Left colon (tissue), 2 donors: ENCODE measurements at regions of chr17 and their contacts with region 1.

Region 1: GRCh38 chr17:58112970-58113631 is 29.9 kb downstream of the DYNLL2 start:
- DNase-seq: peak; percentile 58 to 85
- ATAC-seq: peak; percentile 91

Region 2: DNA sequence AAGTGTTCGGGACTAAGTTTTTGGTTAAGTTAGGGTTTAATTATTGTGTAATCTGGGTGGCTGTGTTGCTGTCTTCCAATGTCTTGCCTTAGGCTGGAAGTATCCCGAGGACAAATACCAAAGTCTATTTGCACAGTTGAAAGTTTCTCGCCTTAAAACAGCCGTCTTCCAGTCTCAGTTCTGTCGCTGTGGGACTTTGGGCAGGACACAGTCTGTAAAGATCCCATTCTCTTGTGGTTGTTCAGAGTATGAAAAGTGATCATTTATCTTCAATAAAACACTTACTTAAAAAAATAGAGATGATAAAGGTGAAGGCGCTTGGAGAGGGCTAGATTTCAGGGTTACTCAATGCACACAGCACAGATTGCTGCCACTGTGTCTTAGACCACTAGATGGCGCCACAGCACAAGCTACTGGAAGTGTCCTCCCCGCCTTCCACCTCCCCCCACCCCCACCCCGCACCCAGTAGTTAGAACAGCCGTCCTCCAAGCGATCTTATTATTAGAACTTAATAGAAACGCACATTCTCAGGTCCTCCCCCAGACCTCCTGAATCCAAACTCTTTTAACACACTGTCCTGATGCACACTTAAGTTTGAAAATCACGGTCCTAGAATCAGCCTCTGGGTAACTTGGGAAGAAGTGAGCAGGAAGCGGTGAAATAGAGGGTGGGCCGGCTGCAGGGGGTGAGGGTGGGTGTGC is 982.2 kb before region 1 on chr17:
- intact Hi-C with region 1: loop called in 1 of 2 experiments (anchors 10 kb)
- DNase-seq: peak; percentile 73 to 91
- ATAC-seq: peak; percentile 86

Region 3: DNA sequence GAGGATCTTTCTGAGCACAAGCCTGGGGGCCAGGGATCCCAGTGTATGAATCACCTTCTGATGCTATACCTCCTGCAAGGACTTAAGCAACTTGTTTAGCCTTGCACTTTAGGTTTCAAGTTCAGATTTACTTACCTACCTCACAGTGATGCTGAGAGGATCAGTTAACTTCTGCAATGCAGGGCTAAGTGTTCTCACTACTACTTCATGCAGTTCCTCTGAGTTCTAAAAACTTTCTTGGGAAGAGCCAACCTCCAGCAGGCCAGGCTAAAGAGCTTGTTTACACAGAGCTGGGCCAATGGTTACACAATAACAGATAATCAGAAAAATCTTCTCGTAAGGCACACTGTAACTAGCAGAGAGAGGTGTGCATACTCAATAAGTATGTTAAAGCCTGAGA is 138.1 kb before region 1 on chr17:
- intact Hi-C with region 1: no loop called
- DNase-seq: no peak
- ATAC-seq: peak; percentile 44

Region 4: DNA sequence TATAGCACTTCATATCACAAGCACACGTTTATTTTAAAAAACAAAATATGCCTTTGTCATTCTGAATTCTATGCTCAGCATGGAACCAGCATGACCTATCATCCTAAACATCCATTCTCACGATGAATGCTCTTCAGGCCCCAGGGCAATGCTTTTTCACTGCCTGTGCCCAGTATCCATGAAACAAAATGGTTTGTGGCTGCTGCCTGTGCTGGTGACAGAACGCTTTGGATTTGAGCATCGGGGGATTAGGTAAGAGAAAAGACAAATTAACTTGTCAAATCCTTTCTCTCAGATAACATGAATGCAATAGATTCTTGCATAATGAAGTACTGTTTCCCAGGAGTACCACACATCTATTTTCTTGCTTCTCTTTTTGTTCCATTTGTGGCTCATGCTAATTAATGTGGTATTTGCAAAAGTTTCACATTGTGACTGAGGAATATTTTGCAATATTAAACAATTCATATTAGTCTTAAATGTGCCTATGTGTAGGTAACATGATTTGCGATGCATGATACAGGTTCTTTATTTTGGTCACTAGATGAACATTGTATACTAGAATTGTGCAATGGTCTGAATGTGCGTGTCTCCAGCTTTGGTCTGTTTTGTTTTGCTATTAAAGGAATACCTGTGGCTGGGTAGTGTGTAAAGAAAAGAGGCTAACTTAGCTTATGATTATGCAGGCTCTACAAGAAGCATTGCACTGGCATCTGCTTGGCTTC is 80.2 kb before region 1 on chr17:
- intact Hi-C with region 1: no loop called
- DNase-seq: no peak
- ATAC-seq: no peak

Region 5: DNA sequence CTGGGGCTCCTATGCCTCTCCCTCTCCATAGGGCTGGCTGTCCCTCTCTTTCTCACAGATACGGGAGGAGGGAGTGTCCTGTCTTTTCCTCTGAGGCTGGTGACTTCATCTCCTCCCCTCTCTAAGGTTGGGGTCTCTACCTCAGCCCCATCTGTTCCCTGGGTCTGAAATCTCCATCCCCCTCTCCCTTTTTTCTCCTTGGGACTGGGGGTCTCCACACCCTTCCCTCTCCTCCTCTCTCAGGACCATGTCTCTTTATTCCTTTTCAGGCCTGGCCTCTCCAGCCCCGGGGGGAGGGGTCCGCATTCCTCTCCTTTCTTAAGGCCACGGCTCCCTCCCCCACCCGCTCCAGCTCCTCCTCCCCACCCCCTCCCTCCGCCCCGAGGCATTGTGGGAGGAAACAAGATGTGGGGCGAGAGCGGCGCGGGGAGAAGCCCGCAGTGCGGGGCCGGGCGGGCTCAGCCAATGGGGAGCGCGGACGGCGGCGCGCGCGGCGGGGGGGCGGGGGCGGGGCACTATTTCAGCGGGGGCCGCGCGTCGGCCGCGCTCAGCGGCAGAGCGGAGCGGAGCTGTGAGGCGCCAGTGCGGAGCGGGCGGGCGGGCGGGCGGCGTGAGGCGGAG is 30.1 kb before region 1 on chr17 and contains the start of gene DYNLL2:
- intact Hi-C with region 1: no loop called
- DNase-seq: peak; percentile 94
- ATAC-seq: peak; percentile 83
- total RNA-seq, gene DYNLL2: 35.0 to 35.9 TPM